Activated CD4-positive, alpha-beta memory T cell treated with anti-CD3 and anti-CD28 coated beads, Interleukin-2, amount 10 ng/mL, durations not matched to agents 7 days and 5 days (primary cell): ENCODE measurements at regions of chr6 and their contacts with region 1.

Region 1: DNA sequence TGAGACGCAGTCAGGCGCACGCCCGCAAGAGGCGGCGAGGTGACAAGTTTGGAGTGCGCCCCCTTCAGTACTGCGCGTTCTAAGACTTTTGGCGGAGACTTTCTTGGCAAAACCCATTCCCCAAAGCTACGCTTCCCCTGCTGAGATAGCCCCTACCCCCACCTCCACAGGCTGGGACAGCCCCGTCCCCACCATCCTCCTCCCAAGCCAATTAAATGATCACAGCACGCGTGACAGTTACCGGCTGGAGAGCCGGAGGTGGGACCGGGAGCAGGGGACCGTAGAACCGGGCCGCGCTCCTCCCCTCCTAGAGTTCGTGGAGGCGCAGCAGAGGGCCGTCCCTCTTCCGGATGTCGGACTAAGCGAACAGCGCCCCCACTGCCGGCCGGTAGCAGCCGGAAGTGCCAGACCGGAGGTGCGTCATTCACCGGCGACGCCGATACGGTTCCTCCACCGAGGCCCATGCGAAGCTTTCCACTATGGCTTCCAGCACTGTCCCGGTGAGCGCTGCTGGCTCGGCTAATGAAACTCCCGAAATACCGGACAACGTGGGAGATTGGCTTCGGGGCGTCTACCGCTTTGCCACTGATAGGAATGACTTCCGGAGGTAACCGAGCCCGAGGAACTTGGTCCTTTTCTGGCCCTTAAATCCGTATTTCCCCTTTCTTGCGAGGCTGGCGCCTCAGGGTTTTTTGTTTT is at the start of gene TOMM6:
- DNase-seq: peak; percentile 96
- H3K4me3 Mint-ChIP-seq: peak within 1 kb of the TSS; percentile 82
- H3K27ac Mint-ChIP-seq: peak within 1 kb of the TSS; percentile 85
- H3K4me1 Mint-ChIP-seq: peaks cover 20% of the 10 kb centered on the region
- H3K27me3 Mint-ChIP-seq: peaks cover 5% of the 10 kb centered on the region
- total RNA-seq, gene TOMM6: 126 to 130 TPM

Region 2: GRCh38 chr6:41775293-41776181 is 11.8 kb before region 1 on chr6:
- CTCF ChIA-PET with region 1: interaction called, 27 read pairs
- POLR2A ChIA-PET with region 1: interaction called, 7 read pairs
- DNase-seq: peak; percentile 55
- H3K4me3 Mint-ChIP-seq: no peak overlapping the region
- H3K27ac Mint-ChIP-seq: no peak overlapping the region
- H3K4me1 Mint-ChIP-seq: peaks cover 14% of the 10 kb centered on the region
- H3K27me3 Mint-ChIP-seq: no peaks in the 10 kb centered on the region

Region 3: DNA sequence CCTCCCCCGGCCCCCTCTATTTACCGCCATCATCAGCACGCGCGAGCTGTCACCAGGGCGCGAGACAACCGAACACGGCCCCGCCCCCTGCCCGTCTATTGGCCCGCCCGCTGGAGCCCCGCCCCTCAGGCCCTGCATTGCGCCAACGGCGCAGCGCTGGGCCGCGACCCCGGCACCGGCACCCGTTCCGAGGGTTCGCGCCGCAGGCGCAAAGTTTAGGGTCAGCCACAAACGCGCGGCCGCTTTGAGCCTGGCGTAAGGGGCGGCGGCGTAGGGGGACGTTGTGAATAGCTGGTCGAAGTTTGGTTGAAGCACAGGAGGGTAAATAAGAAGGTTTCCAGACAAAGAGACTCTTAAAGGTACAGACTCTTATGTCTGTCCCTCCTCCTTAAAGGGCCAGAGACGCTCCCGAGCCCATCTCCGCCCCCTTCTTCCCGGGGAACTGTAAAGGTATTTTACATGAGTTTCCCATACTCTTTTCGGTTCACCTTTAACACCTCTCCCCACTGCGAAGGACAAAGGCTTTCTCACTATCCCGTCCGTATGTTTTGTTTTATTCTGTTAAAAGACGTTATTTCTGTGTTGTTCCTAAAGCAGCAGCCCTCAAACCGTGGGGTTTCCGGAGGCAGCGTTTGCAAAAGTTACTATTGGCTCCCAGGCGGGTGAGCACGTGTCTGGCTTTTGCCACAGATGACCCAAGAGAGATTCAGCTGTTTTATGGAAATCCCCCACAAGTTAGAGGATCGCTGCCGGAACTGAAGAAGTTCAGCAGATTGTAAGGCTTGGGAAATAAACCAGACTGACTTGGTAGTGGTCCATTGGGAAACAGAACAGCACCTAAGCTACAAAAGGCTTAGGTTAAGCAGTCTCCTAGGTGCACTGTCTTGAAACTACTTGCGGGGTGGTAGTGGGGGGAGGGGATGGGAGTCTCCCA is 108.2 kb after region 1 on chr6 and contains the start of gene USP49:
- CTCF ChIA-PET with region 1: interaction called, 17 read pairs
- POLR2A ChIA-PET with region 1: interaction called, 8 read pairs
- DNase-seq: peak; percentile 91
- H3K4me3 Mint-ChIP-seq: no peak within 1 kb of the TSS
- H3K27ac Mint-ChIP-seq: peak within 1 kb of the TSS; percentile 66
- H3K4me1 Mint-ChIP-seq: peaks cover 15% of the 10 kb centered on the region
- H3K27me3 Mint-ChIP-seq: no peaks in the 10 kb centered on the region
- total RNA-seq, gene USP49: 6.8 to 7.3 TPM

Region 4: GRCh38 chr6:41936073-41936837 is 148.9 kb after region 1 on chr6:
- CTCF ChIA-PET with region 1: interaction called, 24 read pairs
- POLR2A ChIA-PET with region 1: interaction called, 21 read pairs
- DNase-seq: peak; percentile 95
- H3K4me3 Mint-ChIP-seq: peak overlapping the region; percentile 100
- H3K27ac Mint-ChIP-seq: peak overlapping the region; percentile 93
- H3K4me1 Mint-ChIP-seq: peaks cover 66% of the 10 kb centered on the region
- H3K27me3 Mint-ChIP-seq: no peaks in the 10 kb centered on the region

Region 5: GRCh38 chr6:42050266-42051032 is 263.1 kb after region 1 on chr6 and contains the start of gene TAF8:
- CTCF ChIA-PET with region 1: interaction called, 266 read pairs
- POLR2A ChIA-PET with region 1: interaction called, 117 read pairs
- DNase-seq: peak; percentile 91
- H3K4me3 Mint-ChIP-seq: peak within 1 kb of the TSS; percentile 82
- H3K27ac Mint-ChIP-seq: peak within 1 kb of the TSS; percentile 94
- H3K4me1 Mint-ChIP-seq: peaks cover 75% of the 10 kb centered on the region
- H3K27me3 Mint-ChIP-seq: no peaks in the 10 kb centered on the region
- total RNA-seq, gene TAF8: 48.0 to 55.1 TPM